ENCODE measurements at regions of chr15 and their contacts with region 1.

Region 1: GRCh38 chr15:65318870-65319356 is 14.4 kb downstream of the RNU5B-1 start:
- DNase-seq: peak; percentile 69
- H3K4me3 ChIP-seq: no peak overlapping the region
- H3K27ac ChIP-seq: no peak overlapping the region
- H3K4me1 ChIP-seq: peaks cover 8% of the 10 kb centered on the region
- H3K27me3 ChIP-seq: no peaks in the 10 kb centered on the region
- CTCF ChIP-seq: peak; percentile 97

Region 2: DNA sequence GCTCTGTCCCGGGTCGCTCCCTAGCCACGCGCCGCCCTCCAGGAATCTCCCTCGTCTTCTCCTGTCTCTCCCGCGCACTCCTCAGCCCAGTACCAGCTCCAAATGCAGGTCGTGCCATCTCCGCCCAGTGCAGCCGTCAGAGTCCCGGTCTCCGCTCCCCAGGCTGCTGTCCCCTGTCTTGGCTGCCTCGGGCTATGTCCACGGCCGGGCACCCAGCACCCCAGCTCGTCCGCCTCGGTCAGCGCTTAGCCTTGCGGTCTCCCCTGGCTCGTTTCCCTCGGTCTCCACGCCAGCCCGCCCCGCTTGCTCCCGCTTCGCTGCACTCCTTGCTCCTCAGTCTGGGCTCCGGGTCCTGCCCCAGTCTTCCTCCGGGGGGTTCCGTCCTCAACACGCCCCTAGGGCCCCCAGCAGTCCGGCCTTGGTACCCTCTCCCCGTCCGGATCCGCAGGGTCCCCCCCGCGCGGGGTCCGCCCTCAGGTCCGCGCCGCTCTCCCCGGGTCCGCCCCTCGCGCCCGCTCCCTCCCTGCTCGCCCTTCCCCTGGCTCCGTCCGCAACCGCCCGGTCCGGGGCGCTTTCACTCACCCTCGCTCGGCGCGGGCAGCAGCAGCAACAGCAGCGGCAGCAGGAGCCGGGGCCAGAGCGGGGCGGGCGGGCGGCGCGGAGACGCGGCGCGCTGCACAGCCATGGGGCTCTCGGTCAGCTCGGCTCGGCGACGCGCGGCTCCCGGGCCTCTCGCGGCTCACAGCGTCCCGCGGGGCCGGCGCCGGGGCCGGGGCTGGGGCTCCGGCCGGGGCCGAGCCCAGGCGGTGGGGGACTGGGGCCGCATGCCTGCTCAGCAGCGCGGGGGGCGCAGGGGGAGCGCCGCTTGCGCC is 58.4 kb after region 1 on chr15:
- intact Hi-C with region 1: loop called (anchors 5 kb)
- DNase-seq: no peak
- H3K4me3 ChIP-seq: peak overlapping the region; percentile 73
- H3K27ac ChIP-seq: no peak overlapping the region
- H3K4me1 ChIP-seq: peaks cover 24% of the 10 kb centered on the region
- H3K27me3 ChIP-seq: peaks cover 78% of the 10 kb centered on the region
- CTCF ChIP-seq: no peak

Region 3: DNA sequence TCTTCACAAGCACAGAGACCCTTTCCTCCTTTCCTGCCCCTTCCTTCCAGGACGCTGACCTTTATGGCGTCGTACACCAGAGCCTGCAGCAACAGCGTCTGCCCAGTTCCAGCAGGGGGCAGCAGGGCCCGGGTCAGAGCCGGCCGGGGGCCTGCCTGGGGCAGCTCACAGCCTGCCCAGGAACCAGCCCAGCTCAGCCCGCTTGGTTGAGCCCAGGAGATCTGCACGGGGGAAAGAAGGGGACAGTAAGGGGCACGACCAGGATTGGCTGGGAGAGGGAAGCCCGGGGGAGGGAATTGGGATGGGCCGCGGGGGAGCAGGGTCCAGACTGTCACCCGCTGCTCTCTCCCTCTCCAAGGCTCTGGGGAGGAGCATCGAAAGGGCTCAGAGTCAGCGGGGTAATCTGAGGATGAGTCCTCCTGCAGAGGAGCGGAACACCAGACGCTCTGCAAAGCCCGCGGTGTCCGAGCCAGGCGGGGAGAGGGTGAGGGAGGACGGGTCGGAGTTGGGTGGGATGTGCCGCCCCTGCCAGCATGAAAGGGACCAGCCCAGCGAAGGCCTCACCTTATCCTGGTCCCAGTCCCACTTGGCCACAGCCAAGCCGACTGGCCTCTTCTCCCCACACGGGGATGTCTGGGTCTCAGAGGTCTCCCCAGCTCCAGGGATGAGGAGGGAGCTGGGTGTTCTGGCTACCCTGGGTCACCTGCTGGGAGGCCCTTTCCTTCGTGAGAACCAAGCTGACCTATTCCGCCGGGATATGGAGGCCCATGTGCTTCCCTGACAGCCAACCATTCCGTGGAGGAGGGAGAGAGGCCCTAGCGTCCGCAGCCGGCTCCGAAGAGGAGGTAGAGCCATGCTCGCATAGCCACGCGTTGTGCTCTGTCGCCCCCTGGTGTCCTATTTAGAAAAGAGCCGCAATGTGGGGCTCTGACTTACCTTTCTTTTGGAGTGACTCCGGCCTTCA is 66.3 kb after region 1 on chr15:
- intact Hi-C with region 1: loop called (anchors 5 kb)
- DNase-seq: peak; percentile 85
- H3K4me3 ChIP-seq: peak overlapping the region; percentile 60
- H3K27ac ChIP-seq: peak overlapping the region; percentile 72
- H3K4me1 ChIP-seq: peaks cover 27% of the 10 kb centered on the region
- H3K27me3 ChIP-seq: no peaks in the 10 kb centered on the region
- CTCF ChIP-seq: peak; percentile 85

Region 4: DNA sequence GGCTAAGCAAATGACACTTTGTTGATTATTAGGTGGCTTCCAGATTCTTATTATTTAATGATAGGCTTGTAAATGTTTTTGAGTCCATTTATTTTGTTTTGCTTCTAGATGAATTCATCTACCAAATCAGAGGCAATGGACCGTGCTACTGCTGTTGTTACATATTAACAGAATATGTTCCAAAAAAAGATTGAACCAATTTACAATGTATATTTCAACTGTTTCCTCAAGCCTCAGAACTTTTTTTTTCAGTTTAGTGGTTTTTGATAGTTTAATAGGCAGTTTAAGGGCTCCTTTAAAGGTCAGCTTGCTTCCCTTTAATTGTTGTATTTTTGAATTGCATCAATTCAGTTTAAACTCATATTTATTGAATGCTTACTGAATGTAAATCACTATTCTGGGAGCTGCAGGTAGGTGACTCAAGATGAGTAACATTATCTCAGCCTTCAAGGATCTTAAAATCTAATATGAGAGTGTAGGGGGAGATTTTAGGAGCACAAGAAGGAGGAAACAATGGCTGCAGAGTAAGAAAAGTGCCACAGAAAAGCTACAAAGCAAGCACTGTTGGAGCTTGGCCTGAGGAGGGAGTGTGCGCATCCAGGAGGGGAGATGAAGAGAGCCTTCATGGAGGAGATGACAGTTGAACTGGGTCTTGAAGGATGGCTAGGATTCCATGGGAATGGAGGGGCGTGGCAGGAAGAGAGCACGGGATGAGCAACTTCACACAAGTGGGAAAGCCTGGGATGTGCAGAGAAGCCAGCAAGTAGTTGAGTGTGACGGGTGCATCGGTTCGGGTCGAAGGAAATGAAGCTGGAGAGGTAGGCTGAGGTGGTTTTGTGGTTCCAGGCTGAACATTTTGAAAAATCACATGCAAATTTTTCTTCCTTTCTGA is 1082.5 kb after region 1 on chr15:
- intact Hi-C with region 1: no loop called
- DNase-seq: no peak
- H3K4me3 ChIP-seq: no peak overlapping the region
- H3K27ac ChIP-seq: no peak overlapping the region
- H3K4me1 ChIP-seq: peaks cover 36% of the 10 kb centered on the region
- H3K27me3 ChIP-seq: no peaks in the 10 kb centered on the region
- CTCF ChIP-seq: no peak

Measured in left ventricle myocardium inferior (tissue), 1 donor.